Activated B cell treated with CpG ODN at 0.5 μM for 24 hours (primary cell): ENCODE measurements at regions of chr5 and their contacts with region 1.

Region 1: GRCh38 chr5:115841382-115842088 is at the starts of genes AP3S1 and ATG12:
- DNase-seq: peak; percentile 96
- ATAC-seq: peak; percentile 81
- H3K4me3 Mint-ChIP-seq: peak within 1 kb of the TSS; percentile 98
- H3K27ac Mint-ChIP-seq: peak within 1 kb of the TSS; percentile 100
- H3K4me1 Mint-ChIP-seq: peaks cover 67% of the 10 kb centered on the region
- H3K27me3 Mint-ChIP-seq: no peaks in the 10 kb centered on the region
- CTCF ChIP-seq: no peak
- total RNA-seq, gene AP3S1: 41.5 and 43.2 TPM in 2 replicates
- total RNA-seq, gene ATG12: 54.8 and 73.9 TPM in 2 replicates

Region 2: GRCh38 chr5:115169487-115170133 is 671.9 kb before region 1 on chr5 and contains the start of gene TRIM36:
- CTCF ChIA-PET with region 1: no interaction called
- POLR2A ChIA-PET with region 1: no interaction called
- intact Hi-C with region 1: loop called (anchors 1 kb)
- DNase-seq: peak; percentile 98
- ATAC-seq: peak; percentile 92
- H3K4me3 Mint-ChIP-seq: peak within 1 kb of the TSS; percentile 92
- H3K27ac Mint-ChIP-seq: peak within 1 kb of the TSS; percentile 69
- H3K4me1 Mint-ChIP-seq: peaks cover 16% of the 10 kb centered on the region
- H3K27me3 Mint-ChIP-seq: peaks cover 39% of the 10 kb centered on the region
- CTCF ChIP-seq: no peak
- total RNA-seq, gene TRIM36: 7.5 and 8.9 TPM in 2 replicates

Region 3: DNA sequence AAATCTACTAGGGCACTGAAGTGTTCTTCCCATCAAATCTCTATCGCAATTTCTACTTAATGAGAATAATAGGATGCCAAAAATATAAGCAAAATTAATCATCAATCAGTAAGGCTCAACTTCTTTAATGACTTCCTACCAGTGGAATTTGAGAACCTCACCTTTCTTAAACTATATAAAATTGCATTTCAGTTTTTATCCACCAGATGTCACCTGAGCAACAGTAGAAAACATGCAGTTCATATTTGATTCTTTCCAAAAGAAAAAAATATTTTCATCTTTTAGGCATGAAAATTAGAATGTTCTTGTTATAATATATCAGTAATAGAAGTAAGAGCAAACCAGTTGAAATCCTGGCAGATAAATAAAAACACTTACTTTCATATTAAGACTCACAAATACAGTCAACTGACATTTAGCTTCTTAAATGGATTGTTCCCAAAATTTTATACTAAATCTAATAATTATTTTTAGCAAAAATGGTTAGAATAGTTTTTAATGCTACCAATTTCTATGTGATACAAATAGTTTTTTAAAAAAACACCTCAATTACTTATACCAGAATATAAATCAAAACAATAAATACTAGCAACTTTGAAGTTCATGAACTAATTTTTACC is 531.7 kb before region 1 on chr5:
- CTCF ChIA-PET with region 1: interaction called, 5 read pairs
- POLR2A ChIA-PET with region 1: no interaction called
- intact Hi-C with region 1: loop called (anchors 1 kb)
- DNase-seq: no peak
- ATAC-seq: peak; percentile 61
- H3K4me3 Mint-ChIP-seq: no peak overlapping the region
- H3K27ac Mint-ChIP-seq: no peak overlapping the region
- H3K4me1 Mint-ChIP-seq: no peaks in the 10 kb centered on the region
- H3K27me3 Mint-ChIP-seq: peaks cover 3% of the 10 kb centered on the region
- CTCF ChIP-seq: no peak

Region 4: GRCh38 chr5:115625579-115626444 is 215.7 kb before region 1 on chr5 and contains the start of gene TMED7:
- CTCF ChIA-PET with region 1: interaction called, 4 read pairs
- POLR2A ChIA-PET with region 1: interaction called, 8 read pairs
- intact Hi-C with region 1: loop called (anchors 1 kb)
- DNase-seq: peak; percentile 99
- ATAC-seq: peak; percentile 92
- H3K4me3 Mint-ChIP-seq: no peak within 1 kb of the TSS
- H3K27ac Mint-ChIP-seq: peak within 1 kb of the TSS; percentile 93
- H3K4me1 Mint-ChIP-seq: peaks cover 29% of the 10 kb centered on the region
- H3K27me3 Mint-ChIP-seq: no peaks in the 10 kb centered on the region
- CTCF ChIP-seq: no peak
- total RNA-seq, gene TMED7: 34.9 and 35.0 TPM in 2 replicates

Region 5: DNA sequence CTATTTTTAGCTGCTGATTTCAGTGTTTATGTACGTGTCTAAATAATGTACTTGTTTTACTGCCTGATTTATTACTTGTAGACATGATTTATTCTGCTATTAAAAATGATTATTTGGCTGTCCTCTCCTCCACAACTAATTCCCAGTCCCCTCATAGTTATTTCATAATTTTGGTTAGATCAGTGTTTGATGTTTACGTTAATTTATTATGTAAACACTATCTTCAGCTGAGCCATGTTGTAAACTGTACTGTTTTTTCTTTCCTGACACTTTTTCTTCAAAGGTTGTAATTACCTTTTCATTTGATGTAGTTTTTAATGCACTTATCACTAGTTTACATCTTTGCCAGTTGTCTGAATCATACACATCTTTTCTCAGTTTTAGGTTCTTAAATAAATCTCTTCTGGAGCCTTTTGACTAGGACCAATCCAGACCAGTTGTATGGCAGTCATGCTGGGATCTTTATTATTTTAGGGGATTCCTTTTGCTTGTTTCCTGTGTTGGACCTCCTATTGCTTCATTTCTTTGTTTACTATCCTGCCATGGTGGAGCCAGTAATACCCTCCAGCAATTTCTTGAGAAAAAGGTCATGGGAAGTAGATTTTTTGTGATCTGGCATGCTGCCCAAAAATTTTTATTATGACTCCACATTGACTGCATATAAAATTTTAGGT is 16.2 kb after region 1 on chr5:
- CTCF ChIA-PET with region 1: no interaction called
- POLR2A ChIA-PET with region 1: no interaction called
- intact Hi-C with region 1: no loop called
- DNase-seq: no peak
- ATAC-seq: no peak
- H3K4me3 Mint-ChIP-seq: no peak overlapping the region
- H3K27ac Mint-ChIP-seq: no peak overlapping the region
- H3K4me1 Mint-ChIP-seq: peaks cover 13% of the 10 kb centered on the region
- H3K27me3 Mint-ChIP-seq: no peaks in the 10 kb centered on the region
- CTCF ChIP-seq: no peak

Region 6: GRCh38 chr5:116068028-116068632 is 226.6 kb after region 1 on chr5:
- CTCF ChIA-PET with region 1: interaction called, 7 read pairs
- POLR2A ChIA-PET with region 1: no interaction called
- intact Hi-C with region 1: loop called (anchors 1 kb)
- DNase-seq: no peak
- ATAC-seq: no peak
- H3K4me3 Mint-ChIP-seq: no peak overlapping the region
- H3K27ac Mint-ChIP-seq: no peak overlapping the region
- H3K4me1 Mint-ChIP-seq: no peaks in the 10 kb centered on the region
- H3K27me3 Mint-ChIP-seq: no peaks in the 10 kb centered on the region
- CTCF ChIP-seq: peak; percentile 84

Region 7: DNA sequence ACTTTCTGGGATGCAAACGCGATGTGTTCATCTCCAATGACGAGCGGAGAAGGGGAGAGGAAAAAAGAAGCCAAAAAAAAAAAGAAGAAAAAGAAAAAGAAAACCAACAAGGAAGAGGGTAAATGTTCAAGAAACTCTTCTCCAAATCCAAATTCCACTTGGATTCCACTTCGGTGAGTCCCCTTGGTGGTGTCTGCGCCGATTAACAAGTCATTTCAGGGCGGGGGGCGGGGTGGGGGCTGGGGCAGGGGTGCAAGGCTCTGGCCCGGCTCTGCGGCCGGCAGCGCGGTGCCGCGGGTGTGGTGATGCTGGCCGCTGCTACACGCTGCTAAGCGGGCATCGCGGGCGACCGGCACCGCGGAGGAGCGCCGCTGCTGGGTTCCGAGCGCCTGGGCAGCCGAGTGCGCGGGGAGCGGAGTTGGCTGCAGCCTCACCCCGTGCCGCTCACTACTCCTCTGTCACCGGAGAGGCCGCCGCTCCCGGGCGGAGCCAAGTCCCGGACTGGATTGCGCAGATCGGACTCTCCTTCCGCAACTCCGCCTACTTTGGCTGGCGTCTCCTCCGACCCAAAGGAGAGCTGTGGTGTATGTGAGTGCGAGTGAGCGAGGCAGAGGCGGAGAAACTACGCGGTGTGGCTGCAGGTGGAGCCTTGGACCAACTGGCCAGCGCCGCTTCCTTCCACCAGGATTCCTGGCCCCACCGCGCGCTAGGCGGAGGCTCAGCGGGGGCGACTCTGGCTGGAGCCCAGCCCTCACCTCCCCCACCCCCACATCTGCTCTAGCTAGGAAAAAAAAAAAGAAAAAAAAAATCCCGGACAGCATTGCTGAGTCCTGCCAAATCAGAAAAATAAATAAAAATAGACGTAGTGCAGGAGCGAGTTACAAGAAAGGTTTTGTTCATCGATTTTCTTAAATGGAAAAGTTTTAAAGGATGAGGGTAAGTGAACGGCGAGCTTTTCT is 733.1 kb after region 1 on chr5 and contains the start of gene SEMA6A:
- CTCF ChIA-PET with region 1: no interaction called
- POLR2A ChIA-PET with region 1: no interaction called
- intact Hi-C with region 1: loop called (anchors 5 kb)
- DNase-seq: peak; percentile 46
- ATAC-seq: peak; percentile 69
- H3K4me3 Mint-ChIP-seq: peak within 1 kb of the TSS; percentile 83
- H3K27ac Mint-ChIP-seq: no peak within 1 kb of the TSS
- H3K4me1 Mint-ChIP-seq: peaks cover 42% of the 10 kb centered on the region
- H3K27me3 Mint-ChIP-seq: peaks cover 54% of the 10 kb centered on the region
- CTCF ChIP-seq: no peak
- total RNA-seq, gene SEMA6A: 0.20 TPM in 2 replicates